ENCODE measurements at regions of chr10 and their contacts with region 1.

Region 1: GRCh38 chr10:88810196-88810961 is 7.8 kb downstream of the LIPM start:
- DNase-seq: peak; percentile 28
- CTCF ChIP-seq: peak; percentile 47

Region 2: GRCh38 chr10:88565072-88565471 is 245.3 kb before region 1 on chr10:
- in situ Hi-C with region 1: loop called (anchors 10 kb)
- DNase-seq: peak; percentile 27
- CTCF ChIP-seq: peak; percentile 20

Region 3: GRCh38 chr10:88657901-88658300 is 152.5 kb before region 1 on chr10:
- in situ Hi-C with region 1: no loop called
- DNase-seq: no peak
- CTCF ChIP-seq: no peak

Region 4: GRCh38 chr10:88687853-88688467 is 122.4 kb before region 1 on chr10:
- in situ Hi-C with region 1: loop called (anchors 10 kb)
- DNase-seq: peak; percentile 36
- CTCF ChIP-seq: peak; percentile 70

Region 5: DNA sequence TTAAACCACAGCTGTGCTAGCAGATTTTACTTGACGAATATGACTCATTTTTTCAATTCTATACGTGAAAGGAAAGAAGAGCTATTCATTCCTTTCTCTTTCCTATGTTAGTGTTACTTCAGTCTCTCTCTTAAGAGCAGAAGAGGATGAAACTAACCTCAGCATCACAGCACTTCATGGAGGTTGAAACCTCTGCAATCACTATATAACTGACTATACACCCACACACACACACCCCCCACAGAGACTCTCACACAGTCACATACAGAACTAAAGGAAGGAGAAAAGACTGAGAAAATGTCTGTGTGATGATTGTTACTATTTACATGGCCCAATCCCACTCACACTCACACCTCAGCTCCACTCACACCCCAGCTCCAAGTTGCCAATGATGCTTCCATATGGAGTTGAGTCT is 995.2 kb after region 1 on chr10:
- in situ Hi-C with region 1: no loop called
- DNase-seq: peak; percentile 48
- CTCF ChIP-seq: no peak

Measured in GM13976 (cell line).